ENCODE measurements at regions of chr3 and their contacts with region 1.

Region 1: GRCh38 chr3:40432793-40433192 is 24.3 kb upstream of the RPL14 start:
- DNase-seq: peak in 3 of 4 experiments; percentile 37 to 61 (median 50)
- ATAC-seq: peak; percentile 87
- H3K4me3 ChIP-seq: no peak overlapping the region
- H3K27ac ChIP-seq: no peak overlapping the region
- H3K4me1 ChIP-seq: peaks cover 0 to 2% of the 10 kb centered on the region in 2 experiments; a peak in 1 of 5 replicates
- H3K27me3 ChIP-seq: no peaks in the 10 kb centered on the region
- CTCF ChIP-seq: peak; percentile 42 to 83 (median 45); a peak in 3 of 6 replicates
- EP300 ChIP-seq: no peak
- POLR2A ChIP-seq: no peak
- RAD21 ChIP-seq: peak; percentile 79 to 88

Region 2: GRCh38 chr3:40329071-40329470 is 103.7 kb before region 1 on chr3:
- CTCF ChIA-PET with region 1: interaction called, 45 read pairs
- POLR2A ChIA-PET with region 1: interaction called, 3 read pairs
- in situ Hi-C with region 1: loop called (anchors 5 kb)
- intact Hi-C with region 1: loop called (anchors 1 kb)
- DNase-seq: no peak
- ATAC-seq: no peak
- H3K4me3 ChIP-seq: no peak overlapping the region
- H3K27ac ChIP-seq: no peak overlapping the region
- H3K4me1 ChIP-seq: peaks cover 0 to 11% of the 10 kb centered on the region in 2 experiments; a peak in 3 of 5 replicates
- H3K27me3 ChIP-seq: no peaks in the 10 kb centered on the region
- CTCF ChIP-seq: no peak
- EP300 ChIP-seq: no peak
- POLR2A ChIP-seq: no peak
- RAD21 ChIP-seq: no peak

Region 3: GRCh38 chr3:40524568-40525285 is 91.9 kb after region 1 on chr3 and contains the start of gene ZNF621:
- CTCF ChIA-PET with region 1: no interaction called
- POLR2A ChIA-PET with region 1: no interaction called
- in situ Hi-C with region 1: no loop called
- intact Hi-C with region 1: no loop called
- DNase-seq: peak; percentile 95 to 98 (median 98)
- ATAC-seq: peak; percentile 99
- H3K4me3 ChIP-seq: peak within 1 kb of the TSS; percentile 87
- H3K27ac ChIP-seq: peak within 1 kb of the TSS; percentile 88
- H3K4me1 ChIP-seq: peaks cover 9 to 12% of the 10 kb centered on the region in 2 experiments; a peak in 4 of 5 replicates
- H3K27me3 ChIP-seq: no peaks in the 10 kb centered on the region
- CTCF ChIP-seq: peak in 1 of 3 experiments; percentile 16; a peak in 2 of 6 replicates
- EP300 ChIP-seq: peak; percentile 5; the same call in 1 of the 2 replicates
- POLR2A ChIP-seq: peak; percentile 98
- RAD21 ChIP-seq: peak in 1 of 2 experiments; percentile 44; a peak in 2 of 4 replicates
- polyA plus RNA-seq, gene ZNF621: 4.7 to 7.3 TPM

Measured in K562 (cell line).